Prostate gland (tissue), 2 donors: ENCODE measurements at regions of chr18 and their contacts with region 1.

Region 1: GRCh38 chr18:30709595-30709994 is 332.9 kb downstream of the DSC3 start:
- DNase-seq: no peak
- H3K4me3 ChIP-seq: no peak overlapping the region
- H3K27ac ChIP-seq: no peak overlapping the region
- H3K4me1 ChIP-seq: no peaks in the 10 kb centered on the region
- H3K27me3 ChIP-seq: no peaks in the 10 kb centered on the region
- CTCF ChIP-seq: no peak
- POLR2A ChIP-seq: no peak

Region 2: GRCh38 chr18:30644158-30644557 is 65.4 kb before region 1 on chr18:
- intact Hi-C with region 1: loop called (anchors 10 kb)
- DNase-seq: no peak
- H3K4me3 ChIP-seq: no peak overlapping the region
- H3K27ac ChIP-seq: no peak overlapping the region
- H3K4me1 ChIP-seq: no peaks in the 10 kb centered on the region
- H3K27me3 ChIP-seq: no peaks in the 10 kb centered on the region
- CTCF ChIP-seq: no peak
- POLR2A ChIP-seq: no peak

Region 3: GRCh38 chr18:30787410-30787809 is 77.8 kb after region 1 on chr18:
- intact Hi-C with region 1: no loop called
- DNase-seq: no peak
- H3K4me3 ChIP-seq: no peak overlapping the region
- H3K27ac ChIP-seq: no peak overlapping the region
- H3K4me1 ChIP-seq: no peaks in the 10 kb centered on the region
- H3K27me3 ChIP-seq: no peaks in the 10 kb centered on the region
- CTCF ChIP-seq: no peak
- POLR2A ChIP-seq: no peak